ENCODE measurements at regions of chr14 and their contacts with region 1.

Region 1: DNA sequence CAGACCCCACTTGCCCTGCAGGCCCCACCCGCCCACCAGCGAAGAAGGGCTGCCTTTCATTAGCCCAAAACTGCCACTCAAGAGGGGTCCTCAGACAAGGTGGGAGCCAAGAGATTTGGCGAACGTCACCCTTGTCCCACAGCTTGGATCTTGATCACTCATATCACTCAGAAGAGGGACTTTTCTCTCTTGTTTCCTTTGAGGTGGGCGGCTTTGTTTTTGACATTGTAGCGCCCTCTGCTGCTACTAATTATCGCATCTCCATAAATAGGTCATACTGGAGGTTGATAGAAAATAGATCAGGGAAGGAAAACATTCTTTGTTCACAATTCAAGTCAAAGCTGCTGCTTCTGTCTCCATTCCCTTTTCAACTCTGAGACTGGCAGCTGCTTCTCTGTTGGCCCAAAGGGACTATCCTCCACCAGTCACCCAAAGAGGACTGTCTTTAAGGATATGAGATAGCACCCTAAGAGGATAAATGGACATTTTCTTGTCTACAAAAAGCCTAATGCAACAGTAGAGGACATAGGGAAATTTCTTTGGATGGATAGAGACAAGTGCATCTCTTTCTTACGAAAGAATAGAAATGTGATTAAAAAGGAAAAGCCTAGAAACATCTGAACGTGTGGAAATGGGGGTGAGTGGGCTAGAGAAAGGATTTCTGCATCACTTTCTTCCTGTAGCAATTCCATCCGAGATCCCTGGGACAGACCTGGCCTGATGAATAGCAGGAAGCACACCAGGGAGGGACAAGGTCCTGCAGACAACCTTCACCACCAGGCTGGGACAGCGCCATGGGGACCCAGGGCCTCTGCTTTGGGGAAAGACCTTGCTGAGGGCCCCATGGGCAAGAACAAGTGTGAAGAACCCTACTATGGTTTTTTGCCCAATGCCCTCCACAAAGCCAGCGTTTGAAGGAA is 115.8 kb downstream of the DAD1 start:
- DNase-seq: peak; percentile 72
- H3K4me3 ChIP-seq: no peak overlapping the region
- H3K27ac ChIP-seq: no peak overlapping the region
- H3K4me1 ChIP-seq: peaks cover 20% of the 10 kb centered on the region
- H3K27me3 ChIP-seq: peaks cover 0 to 5% of the 10 kb centered on the region in 2 experiments
- CTCF ChIP-seq: peak; percentile 49 to 52
- POLR2A ChIP-seq: no peak

Region 2: GRCh38 chr14:21356511-21356910 is 1116.7 kb before region 1 on chr14:
- CTCF ChIA-PET with region 1: no interaction called
- POLR2A ChIA-PET with region 1: no interaction called
- dilution Hi-C with region 1: no loop called
- intact Hi-C with region 1: no loop called
- DNase-seq: no peak
- H3K4me3 ChIP-seq: no peak overlapping the region
- H3K27ac ChIP-seq: no peak overlapping the region
- H3K4me1 ChIP-seq: no peaks in the 10 kb centered on the region
- H3K27me3 ChIP-seq: no peaks in the 10 kb centered on the region
- CTCF ChIP-seq: no peak
- POLR2A ChIP-seq: no peak

Region 3: DNA sequence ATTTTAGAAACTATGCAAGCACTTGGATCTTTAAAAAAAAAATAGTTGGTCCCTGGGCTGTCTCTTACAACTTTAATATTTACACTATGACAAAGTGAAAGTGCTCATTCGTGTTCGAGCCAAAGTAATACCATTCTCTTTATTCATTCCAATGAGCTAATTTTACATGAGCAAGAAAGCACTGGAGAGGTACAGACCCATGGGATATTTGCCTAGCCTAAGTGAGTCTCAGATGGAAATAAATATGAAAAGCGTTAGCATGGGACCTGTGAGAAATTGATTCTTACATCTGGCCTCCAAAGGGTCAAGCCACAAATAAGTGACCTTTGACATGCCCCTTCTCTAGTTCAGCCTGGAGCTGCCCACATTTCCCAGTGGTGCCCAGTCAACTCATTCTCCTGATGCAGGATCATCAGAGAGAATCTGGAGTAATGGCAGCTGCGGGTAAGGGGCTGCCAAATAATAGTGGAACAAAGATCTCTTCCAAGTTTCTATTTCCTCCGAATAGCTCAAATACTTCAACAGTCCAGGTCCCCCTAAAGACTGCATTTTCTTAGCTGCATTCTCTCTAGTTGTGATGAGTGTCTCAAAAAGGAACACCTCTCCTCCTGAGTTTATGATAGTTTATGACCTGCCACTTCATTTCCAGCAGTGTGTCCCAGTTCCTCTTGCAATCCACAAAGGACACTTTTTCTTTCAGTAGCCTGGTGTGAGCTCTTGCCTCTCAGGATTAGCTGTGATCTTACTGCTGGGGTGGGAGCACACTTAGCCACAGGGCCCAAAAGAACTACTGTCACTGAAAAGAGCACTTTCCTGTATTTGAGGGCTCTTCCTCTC is 92.4 kb before region 1 on chr14:
- CTCF ChIA-PET with region 1: interaction called, 10 read pairs
- POLR2A ChIA-PET with region 1: no interaction called
- dilution Hi-C with region 1: no loop called
- intact Hi-C with region 1: no loop called
- DNase-seq: no peak
- H3K4me3 ChIP-seq: no peak overlapping the region
- H3K27ac ChIP-seq: no peak overlapping the region
- H3K4me1 ChIP-seq: no peaks in the 10 kb centered on the region
- H3K27me3 ChIP-seq: peaks cover 24 to 38% of the 10 kb centered on the region in 2 experiments
- CTCF ChIP-seq: no peak
- POLR2A ChIP-seq: no peak

Region 4: DNA sequence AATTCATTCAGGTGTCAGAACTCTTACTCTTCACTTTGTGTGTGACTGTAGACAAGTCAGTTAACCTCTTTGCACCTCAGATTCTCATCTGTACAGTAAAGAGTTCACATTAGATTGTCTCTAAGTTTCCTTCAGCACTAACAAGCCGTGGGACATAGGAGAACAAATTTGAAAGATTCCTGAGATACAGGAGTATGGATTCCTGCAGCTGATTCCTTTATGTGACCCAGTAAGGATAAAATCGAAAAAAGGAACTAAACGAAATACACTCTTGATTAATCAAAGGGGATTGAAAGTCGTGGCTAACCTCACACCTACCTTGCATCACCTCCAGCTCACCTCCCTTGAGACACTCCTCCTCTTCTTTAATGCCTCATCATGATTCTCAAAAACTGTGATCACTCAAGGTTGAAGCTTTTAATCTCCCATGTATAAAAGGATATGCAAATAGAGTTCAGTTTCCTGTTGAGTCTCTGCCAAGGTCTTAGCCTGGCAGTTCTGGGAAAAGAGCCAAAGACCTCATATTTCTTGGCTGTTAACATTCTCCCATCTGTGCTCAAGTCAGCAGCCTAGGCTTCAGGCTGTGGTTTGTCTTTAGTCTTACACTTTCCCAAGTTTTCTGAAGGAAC is 40.7 kb before region 1 on chr14:
- CTCF ChIA-PET with region 1: interaction called, 15 read pairs
- POLR2A ChIA-PET with region 1: no interaction called
- dilution Hi-C with region 1: no loop called
- intact Hi-C with region 1: loop called (anchors 5 kb)
- DNase-seq: peak; percentile 97
- H3K4me3 ChIP-seq: no peak overlapping the region
- H3K27ac ChIP-seq: no peak overlapping the region
- H3K4me1 ChIP-seq: peaks cover 29% of the 10 kb centered on the region
- H3K27me3 ChIP-seq: peaks cover 4 to 6% of the 10 kb centered on the region in 2 experiments
- CTCF ChIP-seq: no peak
- POLR2A ChIP-seq: no peak

Region 5: DNA sequence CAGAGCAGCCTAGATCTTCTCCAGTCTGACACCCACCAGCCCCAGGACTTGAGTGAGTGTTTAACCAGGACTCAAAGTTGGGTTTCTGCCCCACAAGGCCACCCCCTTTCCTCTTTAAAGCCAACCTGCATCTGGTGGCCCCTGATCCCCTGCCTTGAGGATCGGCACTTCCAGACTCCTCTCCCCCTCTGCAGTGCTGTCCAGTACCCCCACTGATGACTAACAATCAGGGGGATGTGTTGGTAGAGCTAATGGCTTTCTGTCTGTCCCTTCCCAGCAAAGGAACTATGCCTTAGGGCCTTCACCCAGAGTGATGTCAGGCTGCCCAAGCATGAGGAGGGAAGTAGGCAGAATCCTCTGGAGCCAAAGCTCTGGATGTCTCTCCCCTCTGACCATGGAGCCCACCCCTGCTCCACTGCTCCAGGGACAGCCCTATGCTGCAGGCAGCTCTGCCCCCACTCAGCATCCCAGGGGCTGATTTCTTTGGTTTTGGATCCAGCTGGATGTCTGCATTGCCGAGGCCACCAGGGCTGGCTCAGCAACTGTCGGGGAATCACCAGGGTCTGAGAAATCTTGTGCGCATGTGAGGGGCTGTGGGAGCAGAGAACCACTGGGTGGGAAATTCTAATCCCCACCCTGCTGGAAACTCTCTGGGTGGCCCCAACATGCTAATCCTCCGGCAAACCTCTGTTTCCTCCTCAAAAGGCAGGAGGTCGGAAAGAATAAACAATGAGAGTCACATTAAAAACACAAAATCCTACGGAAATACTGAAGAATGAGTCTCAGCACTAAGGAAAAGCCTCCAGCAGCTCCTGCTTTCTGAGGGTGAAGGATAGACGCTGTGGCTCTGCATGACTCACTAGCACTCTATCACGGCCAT is 72.9 kb after region 1 on chr14:
- CTCF ChIA-PET with region 1: interaction called, 7 read pairs
- POLR2A ChIA-PET with region 1: no interaction called
- dilution Hi-C with region 1: no loop called
- intact Hi-C with region 1: loop called (anchors 1 kb)
- DNase-seq: peak; percentile 93
- H3K4me3 ChIP-seq: no peak overlapping the region
- H3K27ac ChIP-seq: peak overlapping the region; percentile 86
- H3K4me1 ChIP-seq: peaks cover 48% of the 10 kb centered on the region
- H3K27me3 ChIP-seq: no peaks in the 10 kb centered on the region
- CTCF ChIP-seq: no peak
- POLR2A ChIP-seq: no peak

Measured in endothelial cell of umbilical vein (primary cell).